Thyroid gland (tissue), 4 donors: ENCODE measurements at regions of chr12 and their contacts with region 1.

Region 1: DNA sequence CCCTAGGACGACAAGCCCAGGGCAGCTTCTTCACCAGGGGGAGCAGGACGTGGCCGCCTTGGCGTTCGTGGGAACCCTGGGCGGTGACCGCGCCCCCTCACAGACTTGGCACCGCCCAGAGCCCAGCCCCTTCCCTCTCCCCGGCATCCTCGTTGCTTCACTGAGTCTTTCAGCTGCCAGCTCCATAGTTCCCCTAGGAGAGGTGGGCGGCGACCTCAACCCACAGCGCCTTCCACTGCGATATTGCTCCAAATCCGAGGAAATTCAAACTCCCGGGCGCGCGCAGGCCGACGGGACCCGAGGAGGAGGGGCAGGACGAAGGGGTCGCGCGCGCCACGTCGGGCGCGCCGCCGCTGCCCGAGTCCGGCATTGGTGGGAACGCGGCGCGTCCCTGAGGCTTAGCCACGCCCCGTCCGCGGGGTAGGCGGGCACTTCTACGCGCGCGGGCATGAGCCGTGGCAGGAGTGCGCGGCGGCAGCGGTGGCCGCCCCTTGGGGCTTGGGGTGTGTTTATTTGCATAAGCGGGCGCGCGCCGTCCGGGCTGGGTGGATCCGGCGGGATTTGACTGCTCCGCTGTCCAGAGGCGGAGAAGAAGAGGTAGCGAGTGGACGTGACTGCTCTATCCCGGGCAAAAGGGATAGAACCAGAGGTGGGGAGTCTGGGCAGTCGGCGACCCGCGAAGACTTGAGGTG is at the starts of genes APAF1 and IKBIP:
- DNase-seq: peak; percentile 98 to 99
- H3K4me3 ChIP-seq: peak within 1 kb of the TSS; percentile 81 to 96 (median 94)
- H3K27ac ChIP-seq: peak within 1 kb of the TSS; percentile 50 to 80 (median 79)
- H3K4me1 ChIP-seq: peaks cover 9 to 14% of the 10 kb centered on the region in 2 donors
- H3K27me3 ChIP-seq: no peaks in the 10 kb centered on the region
- CTCF ChIP-seq: no peak
- POLR2A ChIP-seq: peak in 1 of 2 donors; percentile 88
- total RNA-seq, gene APAF1: 11.7 to 17.2 (median 14.2) TPM
- total RNA-seq, gene IKBIP: 16.8 to 26.2 (median 19.0) TPM

Region 2: GRCh38 chr12:98503342-98503591 is 141.6 kb before region 1 on chr12:
- intact Hi-C with region 1: no loop called
- DNase-seq: peak; percentile 88 to 91
- H3K4me3 ChIP-seq: peak overlapping the region in 2 of 3 donors; percentile 36 to 59
- H3K27ac ChIP-seq: peak overlapping the region; percentile 81 to 94 (median 93)
- H3K4me1 ChIP-seq: no peaks in the 10 kb centered on the region
- H3K27me3 ChIP-seq: no peaks in the 10 kb centered on the region
- CTCF ChIP-seq: no peak
- POLR2A ChIP-seq: no peak

Region 3: DNA sequence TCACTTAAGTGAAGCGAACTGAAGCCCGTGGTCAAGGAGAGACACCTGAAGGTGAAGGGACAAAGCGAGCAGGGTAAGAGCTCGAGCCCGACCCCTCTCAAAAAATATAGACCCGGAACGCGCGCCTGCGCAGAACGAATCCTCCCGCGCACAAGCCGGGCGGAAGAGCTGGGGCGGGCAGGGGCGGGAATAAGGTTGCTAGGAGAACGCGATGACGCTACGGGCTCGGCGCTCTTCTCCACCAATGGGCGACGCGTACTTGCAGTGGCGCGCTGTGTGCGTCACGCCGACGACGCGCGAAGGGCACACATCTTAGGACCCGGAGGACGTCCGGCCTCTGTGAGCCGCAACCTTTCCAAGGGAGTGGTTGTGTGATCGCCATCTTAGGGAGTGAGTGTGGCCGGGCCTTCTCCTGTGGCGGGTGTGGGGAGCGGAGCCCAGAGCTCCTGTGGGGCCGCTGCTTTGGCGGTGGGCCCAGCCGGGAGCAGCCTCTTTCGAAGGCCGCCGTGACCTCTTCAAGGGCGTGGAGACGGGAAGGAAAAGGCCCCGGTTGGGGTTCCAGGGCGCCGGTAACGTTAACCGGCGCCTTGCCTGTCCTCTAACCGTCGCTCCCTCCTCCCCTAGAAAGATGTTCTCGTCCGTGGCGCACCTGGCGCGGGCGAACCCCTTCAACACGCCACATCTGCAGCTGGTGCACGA is 51.4 kb before region 1 on chr12 and contains the start of gene SLC25A3:
- intact Hi-C with region 1: loop called (anchors 5 kb)
- DNase-seq: peak; percentile 97
- H3K4me3 ChIP-seq: peak within 1 kb of the TSS; percentile 35 to 92 (median 89)
- H3K27ac ChIP-seq: peak within 1 kb of the TSS; percentile 93 to 100 (median 97)
- H3K4me1 ChIP-seq: peaks cover 6 to 14% of the 10 kb centered on the region in 2 donors
- H3K27me3 ChIP-seq: no peaks in the 10 kb centered on the region
- CTCF ChIP-seq: no peak
- POLR2A ChIP-seq: peak; percentile 70 to 99
- total RNA-seq, gene SLC25A3: 439 to 713 (median 472) TPM